ENCODE measurements at regions of chr10 and their contacts with region 1.

Region 1: DNA sequence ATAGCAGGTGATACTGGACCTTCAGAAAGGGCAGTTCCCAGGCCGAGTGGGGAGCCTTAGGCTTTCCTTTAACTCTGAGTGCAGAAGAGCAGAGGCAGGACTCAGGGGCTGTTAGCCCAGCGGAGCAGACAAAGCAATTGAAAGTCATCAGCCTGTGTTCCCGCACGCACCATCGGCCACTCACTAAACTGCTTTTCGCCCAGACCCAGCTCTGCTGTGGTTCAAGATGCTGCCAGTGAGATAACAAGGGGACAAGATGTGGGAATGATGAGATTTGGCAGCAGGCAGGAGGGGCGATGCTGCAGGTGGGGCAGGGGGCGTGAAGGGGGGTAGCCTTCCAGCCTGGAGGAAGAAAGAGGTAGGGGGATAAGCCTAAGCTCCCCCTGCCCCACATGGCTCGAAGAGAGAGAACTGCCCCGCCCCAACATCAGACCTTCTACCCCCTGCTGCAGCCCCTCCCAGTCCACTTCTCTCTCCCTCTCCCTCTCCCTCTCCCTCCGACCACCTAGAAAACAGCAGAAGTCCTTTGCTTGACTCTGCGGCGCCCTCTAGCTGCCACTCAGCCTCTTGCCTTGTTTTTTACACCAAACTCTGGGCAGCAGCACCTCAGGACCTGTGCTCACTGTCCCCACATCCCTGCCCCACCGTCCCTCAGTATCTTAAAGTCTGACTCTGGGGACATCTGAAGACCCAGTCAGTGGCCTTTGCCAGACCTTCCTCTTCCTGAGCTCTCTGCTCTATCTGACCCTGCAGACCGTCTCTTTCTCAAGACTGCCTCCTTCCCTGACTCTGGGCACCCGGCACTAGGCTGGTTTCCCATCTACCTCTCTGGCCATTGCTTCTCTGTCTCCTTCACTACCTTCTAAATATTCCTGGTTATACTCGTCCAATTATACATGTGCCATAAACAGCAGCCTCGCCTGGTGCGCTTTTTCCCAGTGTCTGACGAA is 110.5 kb downstream of the C10orf105 start:
- DNase-seq: peak; percentile 73
- CTCF ChIP-seq: peak; percentile 78

Region 2: GRCh38 chr10:71319042-71319799 is 289.9 kb before region 1 on chr10 and contains the start of gene SLC29A3:
- CTCF ChIA-PET with region 1: interaction called, 62 read pairs
- POLR2A ChIA-PET with region 1: no interaction called
- DNase-seq: peak; percentile 94
- CTCF ChIP-seq: peak; percentile 84

Region 3: DNA sequence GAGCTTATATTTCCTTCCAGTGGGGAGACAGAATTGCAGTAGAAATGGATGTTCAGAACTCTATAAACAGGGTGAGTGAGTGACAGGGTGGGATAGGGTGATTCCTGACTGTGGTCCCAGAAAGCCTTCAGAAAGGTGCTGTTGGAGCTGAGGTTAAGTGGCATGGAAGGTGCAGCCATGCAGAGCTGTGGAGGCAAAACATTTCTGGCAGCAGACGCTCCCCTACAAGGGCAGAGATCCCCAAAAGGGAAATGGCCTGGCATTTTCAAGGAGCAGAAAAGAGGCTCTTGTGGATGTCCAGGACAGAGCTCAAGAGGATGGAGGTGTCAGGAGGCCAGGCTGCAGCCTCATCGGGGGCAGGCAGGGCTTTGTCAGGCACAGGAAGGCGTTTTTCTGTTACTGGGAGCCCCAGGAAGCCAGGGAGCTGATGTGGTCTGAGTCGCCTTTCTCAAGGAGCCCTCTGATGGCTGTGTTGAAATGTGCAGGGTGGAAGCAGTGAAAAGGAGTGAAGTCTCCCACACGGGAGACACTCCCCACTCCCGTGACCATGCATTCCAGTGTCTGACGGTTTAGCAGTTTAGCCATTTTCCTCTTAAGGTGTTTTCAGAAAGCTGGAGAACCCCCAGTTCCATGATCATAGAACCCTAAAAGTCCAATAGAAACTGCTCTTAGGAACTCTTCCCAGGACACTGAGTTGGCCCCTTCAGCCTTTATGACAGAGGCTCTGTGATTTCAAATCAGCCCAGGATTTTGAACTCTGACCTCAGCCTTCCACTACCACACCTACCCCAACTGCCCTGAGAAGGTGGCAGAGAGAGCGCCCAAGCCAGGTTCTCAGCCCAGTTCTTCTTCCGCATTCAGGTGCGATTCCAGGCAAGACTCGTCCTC is 14.2 kb after region 1 on chr10:
- CTCF ChIA-PET with region 1: interaction called, 20 read pairs
- POLR2A ChIA-PET with region 1: no interaction called
- DNase-seq: no peak
- CTCF ChIP-seq: no peak

Region 4: DNA sequence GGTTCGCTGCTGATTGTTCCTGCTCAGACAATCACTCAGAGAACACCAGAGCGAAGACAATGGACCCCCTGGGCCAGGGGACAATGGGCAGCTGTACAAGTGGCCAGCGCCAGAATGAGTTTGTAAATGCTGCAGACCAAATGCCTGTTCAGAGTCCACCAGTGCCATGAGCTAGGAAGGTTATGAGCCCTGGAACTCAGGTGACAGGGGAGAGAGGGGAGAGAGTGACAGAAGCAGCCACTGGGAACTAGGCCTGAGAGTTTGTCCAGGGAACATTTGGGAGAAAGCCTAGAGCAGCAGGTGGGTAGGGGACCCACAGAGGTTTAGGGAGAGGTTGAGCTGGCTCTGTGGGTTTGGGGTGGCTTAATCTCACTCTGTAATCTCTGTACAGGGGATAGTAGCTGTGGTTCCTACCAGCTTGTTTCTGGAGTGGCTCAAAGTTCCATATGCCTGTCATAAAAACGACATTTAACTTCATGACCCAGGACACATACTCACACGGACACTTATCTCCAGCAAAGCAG is 50.1 kb after region 1 on chr10:
- CTCF ChIA-PET with region 1: interaction called, 13 read pairs
- POLR2A ChIA-PET with region 1: no interaction called
- DNase-seq: no peak
- CTCF ChIP-seq: no peak

Region 5: GRCh38 chr10:71748671-71749191 is 139.6 kb after region 1 on chr10:
- CTCF ChIA-PET with region 1: no interaction called
- POLR2A ChIA-PET with region 1: no interaction called
- DNase-seq: peak; percentile 65
- CTCF ChIP-seq: no peak